WTC11 (cell line): ENCODE measurements at regions of chr3 and their contacts with region 1.

Region 1: GRCh38 chr3:124467980-124468902 is 262.0 kb upstream of the UMPS start:
- DNase-seq: peak; percentile 75
- ATAC-seq: peak; percentile 99
- H3K4me3 Mint-ChIP-seq: no peak overlapping the region
- H3K27ac Mint-ChIP-seq: no peak overlapping the region
- H3K4me1 Mint-ChIP-seq: peaks cover 6% of the 10 kb centered on the region
- H3K27me3 Mint-ChIP-seq: no peaks in the 10 kb centered on the region
- CTCF ChIP-seq: peak; percentile 95

Region 2: DNA sequence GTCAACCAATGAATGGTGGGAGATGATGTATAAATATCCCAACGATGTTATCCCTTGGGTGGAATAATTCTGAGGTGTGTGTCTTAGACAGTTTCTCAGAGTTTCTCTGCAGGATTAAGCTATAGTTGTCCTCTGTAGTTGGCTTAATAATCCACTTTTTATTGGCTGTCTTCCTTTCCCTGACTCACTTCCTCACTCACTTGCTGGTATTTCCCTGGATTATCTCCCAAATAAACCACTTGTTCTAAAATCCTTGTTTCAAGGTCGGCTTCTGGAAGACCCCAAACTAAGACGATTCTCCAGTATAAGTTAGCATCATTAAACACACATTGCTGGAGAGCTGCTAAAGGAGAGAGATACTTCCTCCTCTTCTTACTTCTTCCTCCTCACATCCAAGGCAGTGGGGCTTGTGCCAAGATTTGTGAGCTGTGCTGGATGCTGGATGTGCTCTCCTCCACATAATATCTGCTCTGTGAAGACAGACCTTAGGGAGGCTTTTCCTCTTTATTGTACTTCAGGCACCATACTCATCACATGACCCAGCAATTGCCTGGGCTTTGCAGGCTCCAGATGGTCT is 453.8 kb before region 1 on chr3:
- CTCF ChIA-PET with region 1: interaction called, 10 read pairs
- POLR2A ChIA-PET with region 1: no interaction called
- DNase-seq: no peak
- ATAC-seq: no peak
- H3K4me3 Mint-ChIP-seq: no peak overlapping the region
- H3K27ac Mint-ChIP-seq: no peak overlapping the region
- H3K4me1 Mint-ChIP-seq: peaks cover 3% of the 10 kb centered on the region; the same call in 1 of the 2 replicates
- H3K27me3 Mint-ChIP-seq: peaks cover 5% of the 10 kb centered on the region; the same call in 1 of the 2 replicates
- CTCF ChIP-seq: no peak

Region 3: DNA sequence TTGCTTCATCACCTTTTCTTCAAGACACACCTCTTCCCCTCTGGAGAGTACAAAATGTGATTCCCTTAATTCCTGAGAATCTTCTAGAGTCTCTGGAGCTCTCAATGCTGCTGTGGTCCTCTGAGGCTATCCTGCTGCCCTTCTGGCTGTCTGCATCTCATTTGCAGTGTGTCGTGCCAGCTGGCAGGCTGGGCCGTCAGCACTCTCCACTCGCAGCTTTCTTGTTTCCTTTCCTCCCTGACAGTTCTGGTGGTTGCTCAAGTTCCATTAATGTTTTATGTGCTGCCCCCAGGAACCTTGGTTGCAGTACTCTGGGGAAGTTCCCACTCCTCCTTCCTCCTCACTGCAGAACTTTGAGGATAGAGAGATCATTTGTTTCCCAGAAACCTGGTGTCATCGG is 265.5 kb before region 1 on chr3:
- CTCF ChIA-PET with region 1: no interaction called
- POLR2A ChIA-PET with region 1: no interaction called
- DNase-seq: no peak
- ATAC-seq: no peak
- H3K4me3 Mint-ChIP-seq: no peak overlapping the region
- H3K27ac Mint-ChIP-seq: no peak overlapping the region
- H3K4me1 Mint-ChIP-seq: peaks cover 16% of the 10 kb centered on the region; the same call in 1 of the 2 replicates
- H3K27me3 Mint-ChIP-seq: no peaks in the 10 kb centered on the region
- CTCF ChIP-seq: no peak

Region 4: GRCh38 chr3:124351430-124352148 is 116.7 kb before region 1 on chr3:
- CTCF ChIA-PET with region 1: interaction called, 79 read pairs
- POLR2A ChIA-PET with region 1: no interaction called
- DNase-seq: peak; percentile 26
- ATAC-seq: peak; percentile 97
- H3K4me3 Mint-ChIP-seq: no peak overlapping the region
- H3K27ac Mint-ChIP-seq: peak overlapping the region; percentile 34; the same call in 1 of the 2 replicates
- H3K4me1 Mint-ChIP-seq: peaks cover 5% of the 10 kb centered on the region; the same call in 1 of the 2 replicates
- H3K27me3 Mint-ChIP-seq: no peaks in the 10 kb centered on the region
- CTCF ChIP-seq: no peak